ENCODE measurements at regions of chr7 and their contacts with region 1.

Region 1: DNA sequence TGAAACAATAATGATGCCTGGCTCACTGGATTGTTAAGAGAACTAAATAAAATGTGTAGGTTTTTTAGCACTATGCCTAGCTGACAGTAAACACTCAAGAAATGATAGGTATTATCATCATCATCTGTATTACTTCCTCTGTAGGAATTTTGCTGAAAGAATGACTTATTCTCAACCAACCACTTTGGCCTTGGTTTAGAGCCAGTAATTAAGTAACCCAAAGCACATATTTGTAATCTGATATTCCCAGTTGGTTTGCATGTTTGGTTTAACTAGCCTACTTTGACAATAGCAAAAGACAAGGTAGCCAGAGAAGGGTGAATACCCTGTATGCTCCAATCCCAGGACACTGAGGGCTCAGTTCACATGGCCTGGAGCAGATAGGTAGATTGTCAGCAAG is 34.4 kb downstream of the BCAP29 start:
- DNase-seq: no peak
- H3K4me3 Mint-ChIP-seq: no peak overlapping the region
- H3K27ac Mint-ChIP-seq: no peak overlapping the region
- H3K4me1 Mint-ChIP-seq: no peaks in the 10 kb centered on the region
- H3K27me3 Mint-ChIP-seq: no peaks in the 10 kb centered on the region
- CTCF ChIP-seq: no peak

Region 2: DNA sequence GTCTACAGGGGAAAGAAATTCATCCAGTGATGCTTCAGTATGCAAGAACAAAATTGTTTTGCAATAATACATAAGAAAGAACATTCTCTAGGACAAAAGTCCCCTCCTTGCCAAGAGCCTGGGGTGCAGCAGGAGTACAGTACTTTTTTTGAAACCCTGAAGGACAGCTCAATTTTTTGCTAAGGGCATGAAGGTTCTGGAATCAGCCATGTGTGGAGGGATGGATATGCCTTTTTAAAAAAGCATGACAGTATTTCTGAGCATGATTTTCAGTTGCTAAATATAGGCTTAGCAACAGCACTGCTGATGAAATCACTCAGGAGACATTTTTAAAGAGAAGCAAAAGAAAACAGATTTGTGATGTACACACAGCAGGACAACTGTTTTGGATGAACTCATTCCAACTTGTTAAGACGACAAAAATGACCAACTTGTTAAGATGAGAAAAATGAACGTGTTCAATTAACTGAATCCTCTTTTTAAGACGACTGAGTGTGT is 406.4 kb before region 1 on chr7:
- CTCF ChIA-PET with region 1: no interaction called
- intact Hi-C with region 1: no loop called
- DNase-seq: no peak
- H3K4me3 Mint-ChIP-seq: no peak overlapping the region
- H3K27ac Mint-ChIP-seq: no peak overlapping the region
- H3K4me1 Mint-ChIP-seq: no peaks in the 10 kb centered on the region
- H3K27me3 Mint-ChIP-seq: no peaks in the 10 kb centered on the region
- CTCF ChIP-seq: no peak

Region 3: GRCh38 chr7:107427462-107427861 is 187.0 kb before region 1 on chr7:
- CTCF ChIA-PET with region 1: no interaction called
- intact Hi-C with region 1: no loop called
- DNase-seq: no peak
- H3K4me3 Mint-ChIP-seq: no peak overlapping the region
- H3K27ac Mint-ChIP-seq: no peak overlapping the region
- H3K4me1 Mint-ChIP-seq: no peaks in the 10 kb centered on the region
- H3K27me3 Mint-ChIP-seq: no peaks in the 10 kb centered on the region
- CTCF ChIP-seq: no peak

Region 4: DNA sequence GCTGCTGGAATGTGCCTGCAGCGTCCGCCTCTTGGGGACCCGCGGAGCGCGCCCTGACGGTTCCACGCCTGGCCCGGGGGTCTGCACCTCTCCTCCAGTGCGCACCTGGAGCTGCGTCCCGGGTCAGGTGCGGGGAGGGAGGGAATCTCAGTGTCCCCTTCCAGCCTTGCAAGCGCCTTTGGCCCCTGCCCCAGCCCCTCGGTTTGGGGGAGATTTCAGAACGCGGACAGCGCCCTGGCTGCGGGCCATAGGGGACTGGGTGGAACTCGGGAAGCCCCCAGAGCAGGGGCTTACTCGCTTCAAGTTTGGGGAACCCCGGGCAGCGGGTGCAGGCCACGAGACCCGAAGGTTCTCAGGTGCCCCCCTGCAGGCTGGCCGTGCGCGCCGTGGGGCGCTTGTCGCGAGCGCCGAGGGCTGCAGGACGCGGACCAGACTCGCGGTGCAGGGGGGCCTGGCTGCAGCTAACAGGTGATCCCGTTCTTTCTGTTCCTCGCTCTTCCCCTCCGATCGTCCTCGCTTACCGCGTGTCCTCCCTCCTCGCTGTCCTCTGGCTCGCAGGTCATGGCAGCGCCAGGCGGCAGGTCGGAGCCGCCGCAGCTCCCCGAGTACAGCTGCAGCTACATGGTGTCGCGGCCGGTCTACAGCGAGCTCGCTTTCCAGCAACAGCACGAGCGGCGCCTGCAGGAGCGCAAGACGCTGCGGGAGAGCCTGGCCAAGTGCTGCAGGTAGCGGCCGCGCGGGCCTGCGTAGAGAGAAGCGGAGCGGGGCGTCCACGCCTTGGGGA is 46.8 kb after region 1 on chr7:
- CTCF ChIA-PET with region 1: no interaction called
- intact Hi-C with region 1: loop called (anchors 5 kb)
- DNase-seq: peak; percentile 55
- H3K4me3 Mint-ChIP-seq: peak overlapping the region; percentile 80
- H3K27ac Mint-ChIP-seq: no peak overlapping the region
- H3K4me1 Mint-ChIP-seq: no peaks in the 10 kb centered on the region
- H3K27me3 Mint-ChIP-seq: peaks cover 27% of the 10 kb centered on the region
- CTCF ChIP-seq: no peak